ENCODE measurements at regions of chr2 and their contacts with region 1.

Region 1: GRCh38 chr2:223993621-223994232 is 36.5 kb downstream of the MRPL44 start:
- DNase-seq: peak; percentile 82
- H3K4me3 Mint-ChIP-seq: no peak overlapping the region
- H3K27ac Mint-ChIP-seq: peak overlapping the region; percentile 3
- H3K4me1 Mint-ChIP-seq: peaks cover 31% of the 10 kb centered on the region
- H3K27me3 Mint-ChIP-seq: no peaks in the 10 kb centered on the region

Region 2: GRCh38 chr2:223949241-223949840 is 44.4 kb before region 1 on chr2:
- CTCF ChIA-PET with region 1: no interaction called
- intact Hi-C with region 1: no loop called
- DNase-seq: peak; percentile 44
- H3K4me3 Mint-ChIP-seq: peak overlapping the region; percentile 28
- H3K27ac Mint-ChIP-seq: peak overlapping the region; percentile 85
- H3K4me1 Mint-ChIP-seq: peaks cover 64% of the 10 kb centered on the region
- H3K27me3 Mint-ChIP-seq: no peaks in the 10 kb centered on the region

Region 3: GRCh38 chr2:223979730-223980396 is 13.9 kb before region 1 on chr2:
- CTCF ChIA-PET with region 1: interaction called, 13 read pairs
- intact Hi-C with region 1: no loop called
- DNase-seq: no peak
- H3K4me3 Mint-ChIP-seq: no peak overlapping the region
- H3K27ac Mint-ChIP-seq: no peak overlapping the region
- H3K4me1 Mint-ChIP-seq: no peaks in the 10 kb centered on the region
- H3K27me3 Mint-ChIP-seq: no peaks in the 10 kb centered on the region

Region 4: DNA sequence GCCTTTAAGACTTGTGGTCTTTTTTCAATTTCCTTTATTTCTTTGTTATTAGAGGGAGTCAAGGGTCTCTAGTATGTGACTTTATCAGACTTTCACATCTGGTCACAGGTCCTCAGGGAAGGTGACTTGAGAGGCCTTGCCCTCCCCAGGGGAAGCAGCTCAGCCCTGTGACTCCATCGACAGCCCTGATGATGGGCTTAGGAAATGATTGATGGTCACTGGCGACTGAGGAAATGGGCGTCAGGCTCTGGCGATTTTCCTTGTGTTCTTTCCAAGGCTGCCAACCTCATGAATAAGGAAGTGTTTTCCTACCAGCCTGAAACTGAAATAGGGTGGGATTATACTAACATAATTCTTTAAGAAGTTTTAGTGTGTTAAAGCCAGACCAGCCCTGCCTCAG is 24.2 kb after region 1 on chr2:
- CTCF ChIA-PET with region 1: interaction called, 10 read pairs
- intact Hi-C with region 1: no loop called
- DNase-seq: no peak
- H3K4me3 Mint-ChIP-seq: no peak overlapping the region
- H3K27ac Mint-ChIP-seq: no peak overlapping the region
- H3K4me1 Mint-ChIP-seq: peaks cover 41% of the 10 kb centered on the region
- H3K27me3 Mint-ChIP-seq: no peaks in the 10 kb centered on the region

Region 5: GRCh38 chr2:224039124-224039940 is 45.6 kb after region 1 on chr2 and contains the start of gene SERPINE2:
- CTCF ChIA-PET with region 1: interaction called, 14 read pairs
- intact Hi-C with region 1: loop called (anchors 1 kb)
- DNase-seq: peak; percentile 81
- H3K4me3 Mint-ChIP-seq: peak within 1 kb of the TSS; percentile 93
- H3K27ac Mint-ChIP-seq: peak within 1 kb of the TSS; percentile 76
- H3K4me1 Mint-ChIP-seq: peaks cover 30% of the 10 kb centered on the region
- H3K27me3 Mint-ChIP-seq: peaks cover 29% of the 10 kb centered on the region
- total RNA-seq, gene SERPINE2: 64.6 to 69.5 TPM

Region 6: DNA sequence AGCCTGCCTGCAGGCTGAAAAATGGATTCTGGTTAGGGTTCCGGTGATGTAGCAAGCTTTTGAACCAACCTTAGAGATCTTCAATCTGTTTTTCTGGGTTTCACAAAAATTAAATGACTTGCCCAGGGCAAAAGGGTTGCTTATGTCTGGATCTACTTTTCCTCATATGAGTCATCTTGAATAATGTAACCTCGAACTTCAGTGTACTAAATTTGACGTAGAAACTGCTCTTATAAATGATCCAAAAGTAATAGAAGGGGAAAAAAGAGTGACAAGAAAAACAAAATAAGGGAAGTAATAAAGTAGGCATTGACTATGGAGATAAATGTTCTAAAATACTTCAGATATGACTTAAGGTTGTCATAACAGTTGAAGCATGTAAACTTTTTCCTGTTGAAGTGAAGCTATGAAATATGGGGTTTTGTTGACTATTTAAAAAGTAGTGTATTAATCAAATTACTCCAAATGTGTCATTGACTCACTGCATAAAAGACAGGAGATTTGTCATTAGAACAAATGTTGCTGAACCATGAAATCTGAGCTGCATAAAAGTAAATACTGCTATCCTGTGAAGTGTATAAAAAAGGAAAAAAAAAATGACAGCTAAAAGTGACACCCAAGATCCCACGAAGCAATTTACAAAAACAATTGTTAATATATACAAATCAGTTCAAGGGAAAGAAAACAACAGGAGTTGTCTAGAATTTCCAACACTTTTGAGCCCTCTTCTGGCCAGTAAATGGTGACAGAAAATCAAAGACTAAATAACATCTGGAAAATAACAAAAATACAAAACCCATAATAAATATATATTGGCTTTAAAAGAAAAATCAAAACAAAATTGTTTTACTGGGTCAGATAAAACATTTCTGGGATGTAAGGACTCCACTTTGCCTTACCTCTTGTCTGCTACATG is 148.9 kb after region 1 on chr2:
- CTCF ChIA-PET with region 1: interaction called, 5 read pairs
- intact Hi-C with region 1: loop called (anchors 2 kb)
- DNase-seq: no peak
- H3K4me3 Mint-ChIP-seq: no peak overlapping the region
- H3K27ac Mint-ChIP-seq: no peak overlapping the region
- H3K4me1 Mint-ChIP-seq: no peaks in the 10 kb centered on the region
- H3K27me3 Mint-ChIP-seq: peaks cover 9% of the 10 kb centered on the region

Region 7: GRCh38 chr2:224272237-224272910 is 278.6 kb after region 1 on chr2:
- CTCF ChIA-PET with region 1: interaction called, 17 read pairs
- intact Hi-C with region 1: no loop called
- DNase-seq: no peak
- H3K4me3 Mint-ChIP-seq: no peak overlapping the region
- H3K27ac Mint-ChIP-seq: no peak overlapping the region
- H3K4me1 Mint-ChIP-seq: no peaks in the 10 kb centered on the region
- H3K27me3 Mint-ChIP-seq: peaks cover 4% of the 10 kb centered on the region

Region 8: DNA sequence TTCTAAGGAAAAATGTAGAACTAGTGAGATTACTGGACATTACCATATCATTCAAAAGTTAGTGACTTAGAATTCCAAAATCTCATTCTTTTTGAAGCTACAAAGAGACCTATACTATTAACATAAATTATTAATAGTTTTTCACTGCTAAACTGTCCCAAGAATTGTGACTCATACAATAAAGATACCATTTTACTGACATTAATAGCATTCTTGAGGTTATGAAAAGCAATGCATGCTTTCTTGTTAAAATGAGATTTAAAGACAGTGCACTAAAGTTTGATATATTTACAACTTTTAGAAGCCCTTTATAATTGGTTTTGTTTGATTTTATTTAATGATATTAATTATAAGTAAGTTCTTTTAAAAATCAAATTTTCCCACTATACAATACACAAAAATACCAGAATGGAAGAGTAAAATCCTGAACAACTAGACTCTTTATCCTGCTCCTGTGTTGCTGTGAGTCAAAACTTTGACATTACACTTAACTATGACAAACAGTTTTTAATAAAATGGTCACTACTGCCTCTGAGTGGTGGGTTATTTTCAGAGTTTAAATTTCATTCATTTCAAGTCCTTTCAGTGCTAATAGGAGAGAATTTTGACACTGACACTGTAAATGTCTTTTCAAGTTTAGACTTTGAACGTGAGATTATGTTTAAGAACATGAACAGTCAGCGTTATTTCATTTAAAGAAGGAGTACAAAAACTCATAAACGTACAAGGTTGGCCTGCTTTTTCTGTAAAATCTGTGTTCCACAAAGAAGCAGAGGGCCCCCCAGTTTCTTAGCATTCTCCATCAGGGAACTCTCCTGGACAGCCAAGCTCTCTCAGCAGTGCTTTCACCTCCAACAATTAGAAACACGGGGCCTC is 353.7 kb after region 1 on chr2:
- CTCF ChIA-PET with region 1: no interaction called
- intact Hi-C with region 1: no loop called
- DNase-seq: no peak
- H3K4me3 Mint-ChIP-seq: no peak overlapping the region
- H3K27ac Mint-ChIP-seq: no peak overlapping the region
- H3K4me1 Mint-ChIP-seq: no peaks in the 10 kb centered on the region
- H3K27me3 Mint-ChIP-seq: no peaks in the 10 kb centered on the region

Region 9: DNA sequence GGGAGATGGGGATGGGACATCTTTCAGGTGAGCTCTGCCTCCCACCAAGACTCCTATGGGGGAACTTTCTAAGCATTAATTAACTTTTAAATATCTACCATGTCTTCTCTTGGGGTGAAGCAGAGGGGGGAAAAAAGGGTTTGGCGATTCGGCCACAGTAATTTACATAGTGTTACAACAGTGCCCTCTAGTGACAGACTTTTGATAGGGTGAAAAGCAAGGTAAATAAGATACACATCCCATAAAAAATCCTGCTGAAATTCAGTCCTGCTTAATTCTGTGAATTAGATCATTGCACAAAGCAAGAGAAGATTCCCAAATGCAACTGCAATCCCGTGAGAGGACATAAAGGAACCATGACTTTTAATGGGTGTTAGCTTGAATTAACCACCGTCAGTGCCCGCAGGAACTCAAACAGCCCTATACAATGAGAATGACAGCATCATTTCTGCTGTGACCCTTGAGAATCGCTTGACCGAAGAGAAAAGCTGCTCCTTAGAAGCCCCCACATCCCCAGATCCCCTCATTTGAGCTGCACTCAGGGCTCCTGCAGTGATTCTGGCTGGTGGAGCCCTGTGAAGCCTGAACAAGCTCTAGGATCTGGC is 375.4 kb after region 1 on chr2:
- CTCF ChIA-PET with region 1: no interaction called
- intact Hi-C with region 1: loop called (anchors 5 kb)
- DNase-seq: peak; percentile 14
- H3K4me3 Mint-ChIP-seq: no peak overlapping the region
- H3K27ac Mint-ChIP-seq: no peak overlapping the region
- H3K4me1 Mint-ChIP-seq: no peaks in the 10 kb centered on the region
- H3K27me3 Mint-ChIP-seq: no peaks in the 10 kb centered on the region